ENCODE measurements at regions of chrX and their contacts with region 1.

Region 1: DNA sequence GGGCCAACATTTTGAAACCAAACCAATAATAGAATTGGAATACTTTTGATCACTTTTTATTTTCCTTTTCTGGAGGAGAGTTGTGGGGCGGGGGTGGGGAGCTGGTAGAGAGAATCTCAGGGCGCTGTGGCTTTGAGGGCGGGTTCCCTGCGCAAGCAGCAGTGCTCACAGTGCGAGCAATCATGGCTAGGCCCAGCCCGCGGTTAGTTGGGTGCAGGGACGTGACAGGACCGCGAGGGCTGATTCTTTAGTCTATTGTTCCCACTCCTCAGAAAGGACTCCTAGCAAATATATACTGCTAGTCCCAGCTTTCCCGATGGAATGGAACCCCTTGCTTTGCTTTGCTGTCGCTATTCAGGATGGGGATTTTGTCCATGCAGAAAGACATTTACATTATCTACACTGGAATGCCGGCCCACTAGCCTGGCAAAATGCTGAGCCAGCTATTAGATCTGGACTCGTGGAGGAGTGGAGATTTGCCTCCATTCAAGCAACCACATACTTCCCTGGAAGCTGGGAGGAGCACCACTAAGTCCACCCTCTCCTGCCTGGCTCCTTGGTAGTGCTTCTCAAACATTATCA is 23.9 kb upstream of the APLN start:
- DNase-seq: peak in 8 of 9 experiments; percentile 2 to 67 (median 50)
- ATAC-seq: peak; percentile 72
- H3K4me3 ChIP-seq: peak overlapping the region; percentile 49 to 58
- H3K4me3 Mint-ChIP-seq: peak overlapping the region; percentile 73
- H3K27ac ChIP-seq: peak overlapping the region in 1 of 2 experiments; percentile 35
- H3K27ac Mint-ChIP-seq: peak overlapping the region; percentile 82
- H3K4me1 ChIP-seq: peaks cover 18% of the 10 kb centered on the region
- H3K4me1 Mint-ChIP-seq: peaks cover 18% of the 10 kb centered on the region
- H3K27me3 ChIP-seq: no peaks in the 10 kb centered on the region
- H3K27me3 Mint-ChIP-seq: no peaks in the 10 kb centered on the region
- CTCF ChIP-seq: no peak

Region 2: GRCh38 chrX:129737916-129738315 is 59.2 kb after region 1 on chrX:
- CTCF ChIA-PET with region 1: no interaction called
- POLR2A ChIA-PET with region 1: no interaction called
- intact Hi-C with region 1: loop called (anchors 5 to 10 kb)
- DNase-seq: no peak
- ATAC-seq: no peak
- H3K4me3 ChIP-seq: no peak overlapping the region
- H3K4me3 Mint-ChIP-seq: no peak overlapping the region
- H3K27ac ChIP-seq: no peak overlapping the region
- H3K27ac Mint-ChIP-seq: no peak overlapping the region
- H3K4me1 ChIP-seq: peaks cover 17% of the 10 kb centered on the region
- H3K4me1 Mint-ChIP-seq: peaks cover 22% of the 10 kb centered on the region
- H3K27me3 ChIP-seq: no peaks in the 10 kb centered on the region
- H3K27me3 Mint-ChIP-seq: no peaks in the 10 kb centered on the region
- CTCF ChIP-seq: no peak

Region 3: GRCh38 chrX:129843459-129844306 is 165.0 kb after region 1 on chrX and contains the start of gene ZDHHC9:
- CTCF ChIA-PET with region 1: no interaction called
- POLR2A ChIA-PET with region 1: no interaction called
- intact Hi-C with region 1: loop called in 1 of 2 experiments (anchors 5 kb)
- DNase-seq: peak; percentile 70 to 91 (median 81)
- ATAC-seq: peak; percentile 96
- H3K4me3 ChIP-seq: peak within 1 kb of the TSS; percentile 67 to 73
- H3K4me3 Mint-ChIP-seq: peak within 1 kb of the TSS; percentile 86
- H3K27ac ChIP-seq: peak within 1 kb of the TSS; percentile 36 to 60
- H3K27ac Mint-ChIP-seq: peak within 1 kb of the TSS; percentile 64
- H3K4me1 ChIP-seq: peaks cover 24% of the 10 kb centered on the region
- H3K4me1 Mint-ChIP-seq: peaks cover 32% of the 10 kb centered on the region
- H3K27me3 ChIP-seq: no peaks in the 10 kb centered on the region
- H3K27me3 Mint-ChIP-seq: no peaks in the 10 kb centered on the region
- CTCF ChIP-seq: no peak
- total RNA-seq, gene ZDHHC9: 2.4 to 2.6 TPM